OCI-LY7 (cell line): ENCODE measurements at regions of chr5 and their contacts with region 1.

Region 1: GRCh38 chr5:50727149-50727496 is 60.7 kb downstream of the PARP8 start:
- DNase-seq: no peak
- H3K4me3 ChIP-seq: no peak overlapping the region
- H3K27ac ChIP-seq: no peak overlapping the region
- H3K4me1 ChIP-seq: no peaks in the 10 kb centered on the region
- CTCF ChIP-seq: no peak

Region 2: DNA sequence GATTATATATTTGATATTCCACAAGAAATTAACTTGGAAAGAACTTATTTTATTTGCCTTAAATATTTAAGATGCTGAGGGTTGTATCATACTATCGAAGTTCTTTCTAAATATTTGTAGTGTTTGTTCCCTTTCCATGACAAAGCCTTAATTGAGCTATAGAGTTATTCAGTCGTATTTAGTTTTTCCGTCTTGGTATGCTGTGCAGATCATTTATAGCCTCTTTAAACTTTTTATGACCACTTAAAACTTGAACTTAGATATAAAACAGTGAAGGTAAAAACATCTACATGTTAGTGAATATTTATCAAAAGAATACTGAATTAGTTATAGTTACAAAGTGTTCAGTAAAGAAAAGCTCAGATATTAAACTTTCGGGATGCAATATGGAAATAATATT is 13.7 kb after region 1 on chr5:
- CTCF ChIA-PET with region 1: no interaction called
- POLR2A ChIA-PET with region 1: interaction called, 11 read pairs
- intact Hi-C with region 1: no loop called
- DNase-seq: no peak
- H3K4me3 ChIP-seq: no peak overlapping the region
- H3K27ac ChIP-seq: no peak overlapping the region
- H3K4me1 ChIP-seq: peaks cover 19% of the 10 kb centered on the region
- CTCF ChIP-seq: no peak

Region 3: DNA sequence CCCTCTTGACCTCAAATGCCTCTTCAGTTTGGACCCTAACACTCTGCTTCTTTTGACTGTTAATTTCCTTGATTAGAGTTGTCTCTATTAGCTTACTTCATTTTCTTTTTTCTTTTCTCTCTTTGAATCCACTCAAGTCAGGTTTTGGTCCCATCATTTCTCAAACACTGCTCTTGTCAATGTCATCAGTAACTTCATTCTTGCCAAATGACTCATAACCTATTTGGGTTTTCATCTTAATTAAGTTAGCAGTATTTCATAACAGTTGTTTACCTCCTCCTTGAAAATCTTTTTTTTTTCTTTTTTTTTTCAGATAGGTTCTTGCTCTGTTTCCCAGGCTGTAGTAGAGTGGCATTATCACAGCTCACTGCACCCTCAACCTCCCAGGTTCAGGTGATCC is 59.0 kb after region 1 on chr5:
- CTCF ChIA-PET with region 1: no interaction called
- POLR2A ChIA-PET with region 1: no interaction called
- intact Hi-C with region 1: no loop called
- DNase-seq: no peak
- H3K4me3 ChIP-seq: no peak overlapping the region
- H3K27ac ChIP-seq: no peak overlapping the region
- H3K4me1 ChIP-seq: no peaks in the 10 kb centered on the region
- CTCF ChIP-seq: no peak